ENCODE measurements at regions of chr7 and their contacts with region 1.

Region 1: GRCh38 chr7:33050535-33051318 is 11.8 kb downstream of the NT5C3A start:
- DNase-seq: peak; percentile 73
- ATAC-seq: peak; percentile 70
- H3K4me3 ChIP-seq: peak overlapping the region in 2 of 5 experiments; percentile 40 to 48
- H3K4me3 Mint-ChIP-seq: peak overlapping the region; percentile 29
- H3K27ac ChIP-seq: peak overlapping the region; percentile 60 to 83
- H3K27ac Mint-ChIP-seq: peak overlapping the region; percentile 28
- H3K4me1 ChIP-seq: peaks cover 39 to 47% of the 10 kb centered on the region in 2 donors
- H3K4me1 Mint-ChIP-seq: peaks cover 55% of the 10 kb centered on the region
- H3K27me3 ChIP-seq: no peaks in the 10 kb centered on the region
- H3K27me3 Mint-ChIP-seq: no peaks in the 10 kb centered on the region
- CTCF ChIP-seq: peak; percentile 76

Region 2: GRCh38 chr7:32694182-32694581 is 356.5 kb before region 1 on chr7:
- CTCF ChIA-PET with region 1: no interaction called
- POLR2A ChIA-PET with region 1: no interaction called
- intact Hi-C with region 1: loop called (anchors 10 kb)
- DNase-seq: no peak
- ATAC-seq: no peak
- H3K4me3 ChIP-seq: no peak overlapping the region
- H3K4me3 Mint-ChIP-seq: no peak overlapping the region
- H3K27ac ChIP-seq: no peak overlapping the region
- H3K27ac Mint-ChIP-seq: no peak overlapping the region
- H3K4me1 ChIP-seq: peaks cover 10 to 12% of the 10 kb centered on the region in 2 donors
- H3K4me1 Mint-ChIP-seq: peaks cover 16% of the 10 kb centered on the region
- H3K27me3 ChIP-seq: no peaks in the 10 kb centered on the region
- H3K27me3 Mint-ChIP-seq: no peaks in the 10 kb centered on the region
- CTCF ChIP-seq: no peak

Region 3: GRCh38 chr7:32765185-32765584 is 285.5 kb before region 1 on chr7:
- CTCF ChIA-PET with region 1: interaction called, 4 read pairs
- POLR2A ChIA-PET with region 1: no interaction called
- intact Hi-C with region 1: loop called (anchors 1 kb)
- DNase-seq: no peak
- ATAC-seq: no peak
- H3K4me3 ChIP-seq: no peak overlapping the region
- H3K4me3 Mint-ChIP-seq: no peak overlapping the region
- H3K27ac ChIP-seq: no peak overlapping the region
- H3K27ac Mint-ChIP-seq: no peak overlapping the region
- H3K4me1 ChIP-seq: peaks cover 19 to 21% of the 10 kb centered on the region in 2 donors
- H3K4me1 Mint-ChIP-seq: peaks cover 15% of the 10 kb centered on the region
- H3K27me3 ChIP-seq: peaks cover 0 to 26% (median 18%) of the 10 kb centered on the region in 4 experiments
- H3K27me3 Mint-ChIP-seq: peaks cover 45% of the 10 kb centered on the region
- CTCF ChIP-seq: no peak

Region 4: DNA sequence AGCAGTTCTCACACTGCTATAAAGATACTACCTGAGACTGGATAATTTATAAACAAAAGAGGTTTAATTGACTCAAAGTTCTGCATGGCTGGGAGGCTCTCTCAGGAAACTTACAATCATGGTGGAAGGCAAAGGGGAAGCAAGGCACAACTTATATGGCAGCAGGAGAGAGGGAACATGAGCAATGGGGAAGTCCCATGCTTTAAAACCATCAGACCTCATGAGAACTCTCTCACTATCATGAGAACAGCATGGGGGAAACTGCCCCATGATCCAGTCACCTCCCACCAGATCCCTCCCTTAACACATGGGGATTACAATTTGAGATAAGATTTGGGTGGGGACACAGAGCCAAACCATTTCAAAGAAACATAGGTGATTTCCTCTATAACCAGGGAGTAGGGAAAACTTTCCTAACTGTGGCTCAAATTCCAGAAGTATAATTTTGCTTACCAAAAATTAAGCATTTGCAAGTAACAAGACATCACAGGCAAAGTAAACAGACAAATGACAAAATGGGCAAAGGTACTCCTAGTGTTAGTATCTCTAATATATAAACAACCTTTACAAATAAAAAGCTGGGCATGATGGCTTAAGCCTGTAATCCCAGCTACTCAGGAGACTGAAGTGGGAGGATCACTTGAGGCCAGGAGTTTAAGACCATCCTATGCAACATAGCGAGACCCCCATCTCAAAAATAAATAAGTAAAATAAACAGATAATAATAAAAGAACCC is 247.2 kb before region 1 on chr7:
- CTCF ChIA-PET with region 1: interaction called, 4 read pairs
- POLR2A ChIA-PET with region 1: no interaction called
- intact Hi-C with region 1: loop called (anchors 5 kb)
- DNase-seq: no peak
- ATAC-seq: no peak
- H3K4me3 ChIP-seq: no peak overlapping the region
- H3K4me3 Mint-ChIP-seq: no peak overlapping the region
- H3K27ac ChIP-seq: no peak overlapping the region
- H3K27ac Mint-ChIP-seq: no peak overlapping the region
- H3K4me1 ChIP-seq: no peaks in the 10 kb centered on the region
- H3K4me1 Mint-ChIP-seq: peaks cover 2% of the 10 kb centered on the region
- H3K27me3 ChIP-seq: peaks cover 0 to 3% (median 0%) of the 10 kb centered on the region in 4 experiments
- H3K27me3 Mint-ChIP-seq: no peaks in the 10 kb centered on the region
- CTCF ChIP-seq: no peak

Region 5: DNA sequence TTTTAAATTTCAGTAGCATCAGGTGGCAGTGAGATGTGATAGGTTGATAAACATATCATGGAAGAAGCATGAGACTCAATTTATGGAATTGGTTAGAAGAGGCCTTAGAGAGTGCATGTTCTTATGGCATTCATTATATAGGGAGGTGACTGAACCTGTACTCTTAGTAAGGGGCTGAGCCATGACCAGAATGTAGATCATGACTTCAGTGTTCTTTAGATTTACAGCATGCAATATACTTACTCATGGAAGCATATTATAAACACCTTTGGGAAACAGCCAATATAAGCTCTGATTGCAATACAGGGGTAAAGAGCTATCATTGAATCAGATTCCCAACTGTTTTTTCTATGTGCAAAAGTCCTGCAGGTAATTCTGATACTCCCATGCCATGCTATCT is 38.4 kb before region 1 on chr7:
- CTCF ChIA-PET with region 1: no interaction called
- POLR2A ChIA-PET with region 1: no interaction called
- intact Hi-C with region 1: no loop called
- DNase-seq: no peak
- ATAC-seq: no peak
- H3K4me3 ChIP-seq: no peak overlapping the region
- H3K4me3 Mint-ChIP-seq: no peak overlapping the region
- H3K27ac ChIP-seq: no peak overlapping the region
- H3K27ac Mint-ChIP-seq: no peak overlapping the region
- H3K4me1 ChIP-seq: no peaks in the 10 kb centered on the region
- H3K4me1 Mint-ChIP-seq: no peaks in the 10 kb centered on the region
- H3K27me3 ChIP-seq: no peaks in the 10 kb centered on the region
- H3K27me3 Mint-ChIP-seq: no peaks in the 10 kb centered on the region
- CTCF ChIP-seq: no peak

Region 6: GRCh38 chr7:33024189-33024757 is 26.5 kb before region 1 on chr7:
- CTCF ChIA-PET with region 1: interaction called, 10 read pairs
- POLR2A ChIA-PET with region 1: no interaction called
- intact Hi-C with region 1: no loop called
- DNase-seq: no peak
- ATAC-seq: no peak
- H3K4me3 ChIP-seq: no peak overlapping the region
- H3K4me3 Mint-ChIP-seq: no peak overlapping the region
- H3K27ac ChIP-seq: no peak overlapping the region
- H3K27ac Mint-ChIP-seq: no peak overlapping the region
- H3K4me1 ChIP-seq: no peaks in the 10 kb centered on the region
- H3K4me1 Mint-ChIP-seq: peaks cover 2% of the 10 kb centered on the region
- H3K27me3 ChIP-seq: no peaks in the 10 kb centered on the region
- H3K27me3 Mint-ChIP-seq: no peaks in the 10 kb centered on the region
- CTCF ChIP-seq: no peak

Measured in B cell (primary cell).